ENCODE measurements at regions of chr13 and their contacts with region 1.

Region 1: DNA sequence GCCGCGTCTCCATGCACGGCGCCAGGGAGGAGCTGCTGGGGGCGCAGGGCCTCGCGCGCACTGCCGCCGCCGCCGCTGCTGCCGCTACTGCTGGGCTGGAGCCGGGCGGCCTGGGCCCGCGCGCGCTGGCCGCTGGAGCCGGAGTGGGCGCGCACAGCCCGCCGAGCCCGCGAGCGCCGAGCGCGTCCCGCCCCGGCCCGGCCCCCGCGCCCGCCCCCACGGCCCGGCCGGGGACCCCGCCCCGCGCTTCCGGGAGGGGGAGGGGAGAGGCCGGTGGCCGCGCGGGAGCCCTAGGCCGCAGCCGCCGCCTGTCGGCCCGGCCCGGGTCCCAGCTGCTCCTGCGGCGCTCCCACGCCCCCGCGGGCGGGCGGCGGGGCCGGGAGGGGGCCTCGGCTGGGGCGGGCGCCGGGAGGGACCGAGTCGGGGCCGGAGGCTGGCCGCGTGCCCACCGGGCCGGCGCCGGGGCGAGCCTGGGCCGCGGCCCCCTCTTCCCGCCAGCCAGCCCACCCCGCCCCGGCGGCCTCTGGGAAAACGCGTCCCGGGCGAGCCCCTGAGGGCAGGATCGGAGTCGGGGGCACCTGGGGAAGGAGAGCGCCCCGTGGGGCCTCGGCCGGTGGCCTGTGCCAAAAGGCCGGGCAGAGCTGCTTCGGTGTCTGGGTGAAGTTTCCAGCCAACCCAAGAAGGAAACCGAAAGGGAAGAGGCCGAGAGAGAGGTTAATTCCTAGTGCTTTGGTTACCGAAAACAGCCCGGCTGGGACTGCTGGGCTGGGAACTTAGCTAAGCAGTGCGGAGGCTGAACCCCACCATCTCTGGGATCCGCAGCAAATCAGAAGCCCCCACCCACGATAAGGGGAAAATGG is at the start of gene STK24:
- DNase-seq: peak in 5 of 9 donors; percentile 34 to 87 (median 66)
- ATAC-seq: peak; percentile 85
- H3K4me3 ChIP-seq: peak within 1 kb of the TSS; percentile 72
- H3K4me3 Mint-ChIP-seq: peak within 1 kb of the TSS; percentile 84 to 99 (median 93)
- H3K27ac ChIP-seq: peak within 1 kb of the TSS; percentile 85
- H3K27ac Mint-ChIP-seq: peak within 1 kb of the TSS; percentile 84 to 96 (median 93)
- H3K4me1 ChIP-seq: peaks cover 26 to 35% of the 10 kb centered on the region in 2 donors
- H3K4me1 Mint-ChIP-seq: peaks cover 35 to 48% (median 37%) of the 10 kb centered on the region in 7 donors
- H3K27me3 ChIP-seq: no peaks in the 10 kb centered on the region
- H3K27me3 Mint-ChIP-seq: no peaks in the 10 kb centered on the region
- total RNA-seq, gene STK24: 90.1 to 148 (median 121) TPM

Region 2: GRCh38 chr13:98142380-98143156 is 434.6 kb before region 1 on chr13 and contains the start of gene FARP1:
- CTCF ChIA-PET with region 1: no interaction called
- POLR2A ChIA-PET with region 1: no interaction called
- intact Hi-C with region 1: loop called in 1 of 2 experiments (anchors 5 kb)
- DNase-seq: peak in 6 of 9 donors; percentile 1 to 61 (median 6)
- ATAC-seq: peak; percentile 48
- H3K4me3 ChIP-seq: no peak within 1 kb of the TSS
- H3K4me3 Mint-ChIP-seq: peak within 1 kb of the TSS; percentile 42 to 82 (median 70)
- H3K27ac ChIP-seq: no peak within 1 kb of the TSS
- H3K27ac Mint-ChIP-seq: no peak within 1 kb of the TSS
- H3K4me1 ChIP-seq: no peaks in the 10 kb centered on the region
- H3K4me1 Mint-ChIP-seq: peaks cover 0 to 19% (median 13%) of the 10 kb centered on the region in 7 donors
- H3K27me3 ChIP-seq: peaks cover 0 to 6% of the 10 kb centered on the region in 2 donors
- H3K27me3 Mint-ChIP-seq: peaks cover 58 to 72% (median 64%) of the 10 kb centered on the region in 5 donors
- total RNA-seq, gene FARP1: 0.19 to 1.1 (median 0.61) TPM

Region 3: GRCh38 chr13:98509271-98510155 is 67.7 kb before region 1 on chr13:
- CTCF ChIA-PET with region 1: no interaction called
- POLR2A ChIA-PET with region 1: interaction called, 3 read pairs
- intact Hi-C with region 1: loop called in 1 of 2 experiments (anchors 2 kb)
- DNase-seq: peak in 2 of 9 donors; percentile 21 to 43
- ATAC-seq: peak; percentile 91
- H3K4me3 ChIP-seq: no peak overlapping the region
- H3K4me3 Mint-ChIP-seq: peak overlapping the region; percentile 18 to 70 (median 28)
- H3K27ac ChIP-seq: no peak overlapping the region
- H3K27ac Mint-ChIP-seq: peak overlapping the region; percentile 18 to 79 (median 72)
- H3K4me1 ChIP-seq: peaks cover 32 to 34% of the 10 kb centered on the region in 2 donors
- H3K4me1 Mint-ChIP-seq: peaks cover 63 to 99% (median 96%) of the 10 kb centered on the region in 7 donors
- H3K27me3 ChIP-seq: no peaks in the 10 kb centered on the region
- H3K27me3 Mint-ChIP-seq: no peaks in the 10 kb centered on the region

Region 4: GRCh38 chr13:98565726-98566565 is 11.2 kb before region 1 on chr13:
- CTCF ChIA-PET with region 1: interaction called, 5 read pairs
- POLR2A ChIA-PET with region 1: interaction called, 12 read pairs
- intact Hi-C with region 1: loop called (anchors 1 kb)
- DNase-seq: no peak
- ATAC-seq: no peak
- H3K4me3 ChIP-seq: no peak overlapping the region
- H3K4me3 Mint-ChIP-seq: peak overlapping the region; percentile 77 to 99 (median 84)
- H3K27ac ChIP-seq: peak overlapping the region; percentile 69
- H3K27ac Mint-ChIP-seq: peak overlapping the region; percentile 84 to 97 (median 96)
- H3K4me1 ChIP-seq: peaks cover 50 to 87% of the 10 kb centered on the region in 2 donors
- H3K4me1 Mint-ChIP-seq: peaks cover 67 to 99% (median 93%) of the 10 kb centered on the region in 7 donors
- H3K27me3 ChIP-seq: no peaks in the 10 kb centered on the region
- H3K27me3 Mint-ChIP-seq: no peaks in the 10 kb centered on the region

Region 5: DNA sequence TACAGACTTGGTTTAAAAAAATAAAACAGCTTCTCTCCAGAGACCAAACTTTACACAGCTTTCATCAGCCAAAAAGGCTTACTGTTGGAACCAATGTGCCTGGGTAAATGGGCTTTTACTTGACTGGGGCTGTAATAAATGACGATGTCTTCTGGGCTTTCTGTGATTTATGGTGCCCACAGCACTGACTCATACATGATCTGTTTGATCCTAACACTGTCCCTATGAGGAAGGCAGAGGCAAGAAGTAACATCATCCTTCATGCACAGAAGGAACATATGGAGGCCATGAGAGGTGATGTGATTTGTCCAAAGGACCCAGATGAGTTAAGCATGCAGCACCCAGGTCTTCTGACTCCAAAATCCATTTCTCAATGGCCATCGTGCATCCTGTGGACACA is 323.2 kb after region 1 on chr13:
- CTCF ChIA-PET with region 1: no interaction called
- POLR2A ChIA-PET with region 1: no interaction called
- intact Hi-C with region 1: no loop called
- DNase-seq: no peak
- ATAC-seq: no peak
- H3K4me3 ChIP-seq: no peak overlapping the region
- H3K4me3 Mint-ChIP-seq: no peak overlapping the region
- H3K27ac ChIP-seq: no peak overlapping the region
- H3K27ac Mint-ChIP-seq: peak overlapping the region in 3 of 9 donors; percentile 7 to 65 (median 29)
- H3K4me1 ChIP-seq: no peaks in the 10 kb centered on the region
- H3K4me1 Mint-ChIP-seq: peaks cover 5 to 20% (median 16%) of the 10 kb centered on the region in 7 donors
- H3K27me3 ChIP-seq: no peaks in the 10 kb centered on the region
- H3K27me3 Mint-ChIP-seq: no peaks in the 10 kb centered on the region

Measured in naive thymus-derived CD4-positive, alpha-beta T cell (primary cell).